CD8-positive, alpha-beta T cell (primary cell): ENCODE measurements at regions of chr7 and their contacts with region 1.

Region 1: GRCh38 chr7:9600974-9601373 is 1167.6 kb downstream of the NXPH1 start:
- DNase-seq: no peak
- ATAC-seq: no peak
- H3K4me3 ChIP-seq: no peak overlapping the region
- H3K4me3 Mint-ChIP-seq: no peak overlapping the region
- H3K27ac ChIP-seq: no peak overlapping the region
- H3K27ac Mint-ChIP-seq: no peak overlapping the region
- H3K4me1 ChIP-seq: no peaks in the 10 kb centered on the region
- H3K4me1 Mint-ChIP-seq: no peaks in the 10 kb centered on the region
- H3K27me3 ChIP-seq: no peaks in the 10 kb centered on the region
- H3K27me3 Mint-ChIP-seq: no peaks in the 10 kb centered on the region
- CTCF ChIP-seq: no peak

Region 2: GRCh38 chr7:9575716-9576115 is 25.3 kb before region 1 on chr7:
- CTCF ChIA-PET with region 1: no interaction called
- POLR2A ChIA-PET with region 1: no interaction called
- intact Hi-C with region 1: loop called in 1 of 2 experiments (anchors 2 kb)
- DNase-seq: no peak
- ATAC-seq: no peak
- H3K4me3 ChIP-seq: no peak overlapping the region
- H3K4me3 Mint-ChIP-seq: no peak overlapping the region
- H3K27ac ChIP-seq: no peak overlapping the region
- H3K27ac Mint-ChIP-seq: no peak overlapping the region
- H3K4me1 ChIP-seq: no peaks in the 10 kb centered on the region
- H3K4me1 Mint-ChIP-seq: no peaks in the 10 kb centered on the region
- H3K27me3 ChIP-seq: no peaks in the 10 kb centered on the region
- H3K27me3 Mint-ChIP-seq: no peaks in the 10 kb centered on the region
- CTCF ChIP-seq: no peak

Region 3: GRCh38 chr7:9621927-9622326 is 21.0 kb after region 1 on chr7:
- CTCF ChIA-PET with region 1: no interaction called
- POLR2A ChIA-PET with region 1: no interaction called
- intact Hi-C with region 1: loop called in 1 of 2 experiments (anchors 1 kb)
- DNase-seq: no peak
- ATAC-seq: no peak
- H3K4me3 ChIP-seq: no peak overlapping the region
- H3K4me3 Mint-ChIP-seq: no peak overlapping the region
- H3K27ac ChIP-seq: no peak overlapping the region
- H3K27ac Mint-ChIP-seq: no peak overlapping the region
- H3K4me1 ChIP-seq: no peaks in the 10 kb centered on the region
- H3K4me1 Mint-ChIP-seq: no peaks in the 10 kb centered on the region
- H3K27me3 ChIP-seq: no peaks in the 10 kb centered on the region
- H3K27me3 Mint-ChIP-seq: no peaks in the 10 kb centered on the region
- CTCF ChIP-seq: no peak

Region 4: GRCh38 chr7:9711259-9711918 is 110.4 kb after region 1 on chr7:
- CTCF ChIA-PET with region 1: no interaction called
- POLR2A ChIA-PET with region 1: no interaction called
- intact Hi-C with region 1: no loop called
- DNase-seq: no peak
- ATAC-seq: no peak
- H3K4me3 ChIP-seq: no peak overlapping the region
- H3K4me3 Mint-ChIP-seq: no peak overlapping the region
- H3K27ac ChIP-seq: no peak overlapping the region
- H3K27ac Mint-ChIP-seq: no peak overlapping the region
- H3K4me1 ChIP-seq: no peaks in the 10 kb centered on the region
- H3K4me1 Mint-ChIP-seq: no peaks in the 10 kb centered on the region
- H3K27me3 ChIP-seq: no peaks in the 10 kb centered on the region
- H3K27me3 Mint-ChIP-seq: no peaks in the 10 kb centered on the region
- CTCF ChIP-seq: no peak